ENCODE measurements at regions of chr9 and their contacts with region 1.

Region 1: GRCh38 chr9:18442629-18443491 is 31.1 kb upstream of the ADAMTSL1 start:
- DNase-seq: peak; percentile 80
- H3K4me3 Mint-ChIP-seq: no peak overlapping the region
- H3K27ac Mint-ChIP-seq: no peak overlapping the region
- H3K4me1 Mint-ChIP-seq: peaks cover 7% of the 10 kb centered on the region
- H3K27me3 Mint-ChIP-seq: no peaks in the 10 kb centered on the region
- CTCF ChIP-seq: peak; percentile 72

Region 2: GRCh38 chr9:18245911-18246310 is 196.9 kb before region 1 on chr9:
- CTCF ChIA-PET with region 1: interaction called, 10 read pairs
- POLR2A ChIA-PET with region 1: no interaction called
- intact Hi-C with region 1: no loop called
- DNase-seq: no peak
- H3K4me3 Mint-ChIP-seq: no peak overlapping the region
- H3K27ac Mint-ChIP-seq: no peak overlapping the region
- H3K4me1 Mint-ChIP-seq: no peaks in the 10 kb centered on the region
- H3K27me3 Mint-ChIP-seq: no peaks in the 10 kb centered on the region
- CTCF ChIP-seq: no peak

Region 3: GRCh38 chr9:18274693-18275092 is 168.2 kb before region 1 on chr9:
- CTCF ChIA-PET with region 1: interaction called, 14 read pairs
- POLR2A ChIA-PET with region 1: interaction called, 3 read pairs
- intact Hi-C with region 1: no loop called
- DNase-seq: peak; percentile 66
- H3K4me3 Mint-ChIP-seq: peak overlapping the region; percentile 12
- H3K27ac Mint-ChIP-seq: peak overlapping the region; percentile 76
- H3K4me1 Mint-ChIP-seq: peaks cover 10% of the 10 kb centered on the region
- H3K27me3 Mint-ChIP-seq: no peaks in the 10 kb centered on the region
- CTCF ChIP-seq: no peak

Region 4: GRCh38 chr9:18429070-18429469 is 13.8 kb before region 1 on chr9:
- CTCF ChIA-PET with region 1: interaction called, 32 read pairs
- POLR2A ChIA-PET with region 1: interaction called, 5 read pairs
- intact Hi-C with region 1: no loop called
- DNase-seq: peak; percentile 73
- H3K4me3 Mint-ChIP-seq: no peak overlapping the region
- H3K27ac Mint-ChIP-seq: no peak overlapping the region
- H3K4me1 Mint-ChIP-seq: peaks cover 8% of the 10 kb centered on the region
- H3K27me3 Mint-ChIP-seq: no peaks in the 10 kb centered on the region
- CTCF ChIP-seq: no peak

Region 5: GRCh38 chr9:18566121-18566520 is 123.3 kb after region 1 on chr9:
- CTCF ChIA-PET with region 1: no interaction called
- POLR2A ChIA-PET with region 1: no interaction called
- intact Hi-C with region 1: loop called (anchors 5 kb)
- DNase-seq: peak; percentile 61
- H3K4me3 Mint-ChIP-seq: no peak overlapping the region
- H3K27ac Mint-ChIP-seq: peak overlapping the region; percentile 75
- H3K4me1 Mint-ChIP-seq: peaks cover 13% of the 10 kb centered on the region
- H3K27me3 Mint-ChIP-seq: no peaks in the 10 kb centered on the region
- CTCF ChIP-seq: no peak

Measured in MCF 10A (cell line).